ENCODE measurements at regions of chr14 and their contacts with region 1.

Region 1: DNA sequence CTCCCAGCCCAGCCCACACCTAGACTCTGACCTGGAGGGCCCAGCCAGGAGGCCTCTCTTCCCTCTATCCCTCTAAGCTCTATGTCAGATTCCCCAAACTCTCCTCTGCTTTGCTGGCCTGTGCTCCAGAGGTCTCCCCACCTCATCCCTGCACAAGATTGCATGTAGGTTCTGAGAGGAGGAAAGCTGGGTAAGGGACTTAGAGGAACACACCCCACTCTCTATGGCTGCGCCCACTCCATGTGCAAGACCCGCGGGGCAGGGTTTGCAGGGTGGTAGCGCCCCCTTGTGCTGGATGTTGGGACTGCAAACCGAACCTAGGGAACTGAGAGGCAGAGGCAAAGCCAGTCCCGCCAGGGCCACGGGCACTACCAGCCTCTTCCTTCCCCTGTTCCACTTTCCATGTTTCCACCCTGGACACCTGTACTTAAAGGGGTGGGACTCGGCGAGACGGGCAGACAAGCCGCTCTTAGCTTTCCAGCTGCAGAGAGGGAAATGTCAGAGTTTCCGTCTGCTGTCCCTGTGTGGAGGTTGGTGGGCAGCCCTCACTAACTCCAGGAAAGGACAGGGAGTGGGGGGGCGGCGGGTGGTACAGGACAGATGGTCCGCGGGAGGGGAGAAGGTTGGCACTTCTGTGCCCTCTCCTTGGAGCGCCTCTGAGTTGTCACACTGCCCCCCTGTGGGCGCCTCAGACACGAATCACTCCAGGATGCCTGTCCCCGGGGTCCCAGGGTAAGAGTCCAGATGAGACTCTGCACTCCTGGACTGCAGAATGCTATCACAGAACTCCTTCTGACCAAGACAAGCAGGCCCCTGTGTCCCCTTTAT is 16.8 kb downstream of the MMP14 start:
- DNase-seq: peak; percentile 85
- H3K4me3 ChIP-seq: peak overlapping the region; percentile 52 to 63
- H3K27ac ChIP-seq: no peak overlapping the region; a peak in 1 of 4 replicates
- H3K4me1 ChIP-seq: peaks cover 25 to 30% of the 10 kb centered on the region in 2 experiments
- H3K27me3 ChIP-seq: no peaks in the 10 kb centered on the region
- CTCF ChIP-seq: peak; percentile 92
- EP300 ChIP-seq: no peak
- RAD21 ChIP-seq: peak; percentile 97

Region 2: GRCh38 chr14:22766456-22767322 is 86.5 kb before region 1 on chr14 and contains the start of gene OXA1L:
- CTCF ChIA-PET with region 1: interaction called, 16 read pairs
- POLR2A ChIA-PET with region 1: interaction called, 6 read pairs
- DNase-seq: peak; percentile 88
- H3K4me3 ChIP-seq: peak within 1 kb of the TSS; percentile 85 to 93
- H3K27ac ChIP-seq: peak within 1 kb of the TSS; percentile 53 to 92
- H3K4me1 ChIP-seq: peaks cover 6 to 10% of the 10 kb centered on the region in 2 experiments; a peak in 2 of 4 replicates
- H3K27me3 ChIP-seq: no peaks in the 10 kb centered on the region
- CTCF ChIP-seq: no peak
- EP300 ChIP-seq: no peak
- RAD21 ChIP-seq: no peak
- polyA plus RNA-seq, gene OXA1L: 119 and 133 TPM in 2 replicates

Region 3: DNA sequence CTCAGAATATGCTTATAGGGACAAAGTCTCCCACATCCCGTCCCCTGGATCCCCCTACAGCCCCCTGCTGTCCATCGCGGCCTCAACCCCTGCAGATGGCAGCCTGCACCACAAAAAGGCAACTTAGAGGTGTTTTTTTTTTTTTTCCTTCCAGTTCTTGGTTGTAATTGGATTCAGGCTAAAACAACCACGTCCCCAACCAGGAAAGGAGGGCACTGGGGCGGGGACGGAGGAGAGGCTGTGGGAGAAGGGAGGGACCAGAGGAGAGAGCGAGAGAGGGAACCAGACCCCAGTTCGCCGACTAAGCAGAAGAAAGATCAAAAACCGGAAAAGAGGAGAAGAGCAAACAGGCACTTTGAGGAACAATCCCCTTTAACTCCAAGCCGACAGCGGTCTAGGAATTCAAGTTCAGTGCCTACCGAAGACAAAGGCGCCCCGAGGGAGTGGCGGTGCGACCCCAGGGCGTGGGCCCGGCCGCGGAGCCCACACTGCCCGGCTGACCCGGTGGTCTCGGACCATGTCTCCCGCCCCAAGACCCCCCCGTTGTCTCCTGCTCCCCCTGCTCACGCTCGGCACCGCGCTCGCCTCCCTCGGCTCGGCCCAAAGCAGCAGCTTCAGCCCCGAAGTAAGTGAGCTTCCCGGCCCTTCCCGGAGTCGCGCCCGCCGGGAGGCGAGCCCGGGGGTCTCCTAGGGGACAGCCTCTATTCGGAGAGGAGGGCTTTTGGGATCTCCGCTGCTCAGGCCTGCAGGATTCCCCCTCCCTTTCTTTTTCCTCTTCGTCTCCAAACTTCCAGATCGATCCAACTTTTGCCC is 16.6 kb before region 1 on chr14 and contains the start of gene MMP14:
- CTCF ChIA-PET with region 1: interaction called, 59 read pairs
- POLR2A ChIA-PET with region 1: interaction called, 12 read pairs
- DNase-seq: peak; percentile 71
- H3K4me3 ChIP-seq: peak within 1 kb of the TSS; percentile 54 to 71
- H3K27ac ChIP-seq: peak within 1 kb of the TSS in 1 of 2 experiments; percentile 64; a peak in 2 of 4 replicates
- H3K4me1 ChIP-seq: peaks cover 0 to 10% of the 10 kb centered on the region in 2 experiments; a peak in 1 of 4 replicates
- H3K27me3 ChIP-seq: no peaks in the 10 kb centered on the region
- CTCF ChIP-seq: peak; percentile 52
- EP300 ChIP-seq: no peak
- RAD21 ChIP-seq: peak; percentile 45
- polyA plus RNA-seq, gene MMP14: 139 and 142 TPM in 2 replicates

Region 4: GRCh38 chr14:22872033-22872832 is 19.1 kb after region 1 on chr14:
- CTCF ChIA-PET with region 1: interaction called, 42 read pairs
- POLR2A ChIA-PET with region 1: interaction called, 3 read pairs
- DNase-seq: peak; percentile 83
- H3K4me3 ChIP-seq: peak overlapping the region; percentile 77 to 93
- H3K27ac ChIP-seq: peak overlapping the region; percentile 83 to 87
- H3K4me1 ChIP-seq: peaks cover 8 to 17% of the 10 kb centered on the region in 2 experiments
- H3K27me3 ChIP-seq: no peaks in the 10 kb centered on the region
- CTCF ChIP-seq: peak; percentile 97
- EP300 ChIP-seq: no peak
- RAD21 ChIP-seq: peak; percentile 79